Right cardiac atrium (tissue), 5 donors: ENCODE measurements at regions of chr6 and their contacts with region 1.

Region 1: GRCh38 chr6:162385980-162386379 is 341.6 kb downstream of the PRKN start:
- DNase-seq: no peak
- ATAC-seq: peak in 1 of 2 donors; percentile 39
- H3K4me3 ChIP-seq: no peak overlapping the region
- H3K27ac ChIP-seq: no peak overlapping the region
- H3K4me1 ChIP-seq: peaks cover 4% of the 10 kb centered on the region
- H3K27me3 ChIP-seq: no peaks in the 10 kb centered on the region

Region 2: DNA sequence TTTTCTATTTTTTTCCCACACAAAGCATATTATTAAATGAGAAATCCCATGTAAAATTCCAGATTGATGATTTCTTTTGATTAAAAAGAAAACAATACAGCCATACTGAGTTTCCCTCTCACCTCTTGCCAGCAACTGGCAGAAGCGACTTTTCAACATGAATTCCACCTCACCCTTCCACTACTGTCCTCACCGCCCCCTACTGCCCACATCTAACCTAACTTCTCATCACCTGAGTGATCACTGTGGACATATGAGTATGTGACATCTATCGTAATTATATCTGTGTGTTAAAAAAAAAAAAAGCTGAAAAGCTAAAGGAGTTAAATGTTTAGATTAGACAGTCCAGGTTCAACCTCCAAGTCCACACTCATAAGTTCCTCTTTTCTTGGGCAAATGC is 187.1 kb before region 1 on chr6:
- intact Hi-C with region 1: loop called in 1 of 4 experiments (anchors 10 kb)
- DNase-seq: no peak
- ATAC-seq: no peak
- H3K4me3 ChIP-seq: no peak overlapping the region
- H3K27ac ChIP-seq: no peak overlapping the region
- H3K4me1 ChIP-seq: peaks cover 5% of the 10 kb centered on the region
- H3K27me3 ChIP-seq: no peaks in the 10 kb centered on the region